IMR-90 (cell line): ENCODE measurements at regions of chr20 and their contacts with region 1.

Region 1: GRCh38 chr20:7375905-7376304 is 564.4 kb downstream of the HAO1 start:
- DNase-seq: peak; percentile 17
- ATAC-seq: no peak
- H3K4me3 ChIP-seq: no peak overlapping the region
- H3K27ac ChIP-seq: no peak overlapping the region
- H3K4me1 ChIP-seq: no peaks in the 10 kb centered on the region
- H3K27me3 ChIP-seq: no peaks in the 10 kb centered on the region
- CTCF ChIP-seq: peak; percentile 55
- POLR2A ChIP-seq: no peak
- RAD21 ChIP-seq: peak; percentile 36; the same call in 1 of the 2 replicates

Region 2: GRCh38 chr20:7333841-7334240 is 42.1 kb before region 1 on chr20:
- CTCF ChIA-PET with region 1: no interaction called
- POLR2A ChIA-PET with region 1: no interaction called
- dilution Hi-C with region 1: no loop called
- in situ Hi-C with region 1: no loop called
- intact Hi-C with region 1: no loop called
- DNase-seq: no peak
- ATAC-seq: no peak
- H3K4me3 ChIP-seq: no peak overlapping the region
- H3K27ac ChIP-seq: no peak overlapping the region
- H3K4me1 ChIP-seq: no peaks in the 10 kb centered on the region
- H3K27me3 ChIP-seq: no peaks in the 10 kb centered on the region
- CTCF ChIP-seq: no peak
- POLR2A ChIP-seq: no peak
- RAD21 ChIP-seq: no peak

Region 3: DNA sequence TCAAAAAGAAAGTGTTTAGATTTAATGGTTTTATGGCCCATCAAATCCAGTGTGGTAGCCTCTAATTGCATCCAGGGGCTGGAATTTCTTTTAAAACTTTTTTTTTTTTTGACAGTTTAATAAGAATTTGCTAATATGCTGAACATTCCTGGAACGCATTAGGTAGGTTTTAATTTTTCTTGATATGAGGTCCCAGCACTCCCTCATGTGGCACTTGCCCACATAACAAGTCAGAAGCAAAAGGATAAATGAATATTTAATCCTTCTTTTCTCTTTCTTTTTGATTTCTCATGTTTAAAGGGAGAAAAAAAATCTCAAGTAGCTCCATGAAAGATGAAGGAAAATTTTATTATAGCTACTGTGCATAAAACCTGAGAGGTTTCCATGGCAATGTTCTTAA is 550.9 kb after region 1 on chr20:
- CTCF ChIA-PET with region 1: no interaction called
- POLR2A ChIA-PET with region 1: no interaction called
- dilution Hi-C with region 1: no loop called
- in situ Hi-C with region 1: no loop called
- intact Hi-C with region 1: loop called (anchors 10 kb)
- DNase-seq: peak; percentile 53
- ATAC-seq: peak; percentile 65
- H3K4me3 ChIP-seq: no peak overlapping the region
- H3K27ac ChIP-seq: no peak overlapping the region
- H3K4me1 ChIP-seq: no peaks in the 10 kb centered on the region
- H3K27me3 ChIP-seq: peaks cover 5% of the 10 kb centered on the region
- CTCF ChIP-seq: peak; percentile 59
- POLR2A ChIP-seq: no peak
- RAD21 ChIP-seq: peak; percentile 61